SK-N-SH (cell line): ENCODE measurements at regions of chr5 and their contacts with region 1.

Region 1: DNA sequence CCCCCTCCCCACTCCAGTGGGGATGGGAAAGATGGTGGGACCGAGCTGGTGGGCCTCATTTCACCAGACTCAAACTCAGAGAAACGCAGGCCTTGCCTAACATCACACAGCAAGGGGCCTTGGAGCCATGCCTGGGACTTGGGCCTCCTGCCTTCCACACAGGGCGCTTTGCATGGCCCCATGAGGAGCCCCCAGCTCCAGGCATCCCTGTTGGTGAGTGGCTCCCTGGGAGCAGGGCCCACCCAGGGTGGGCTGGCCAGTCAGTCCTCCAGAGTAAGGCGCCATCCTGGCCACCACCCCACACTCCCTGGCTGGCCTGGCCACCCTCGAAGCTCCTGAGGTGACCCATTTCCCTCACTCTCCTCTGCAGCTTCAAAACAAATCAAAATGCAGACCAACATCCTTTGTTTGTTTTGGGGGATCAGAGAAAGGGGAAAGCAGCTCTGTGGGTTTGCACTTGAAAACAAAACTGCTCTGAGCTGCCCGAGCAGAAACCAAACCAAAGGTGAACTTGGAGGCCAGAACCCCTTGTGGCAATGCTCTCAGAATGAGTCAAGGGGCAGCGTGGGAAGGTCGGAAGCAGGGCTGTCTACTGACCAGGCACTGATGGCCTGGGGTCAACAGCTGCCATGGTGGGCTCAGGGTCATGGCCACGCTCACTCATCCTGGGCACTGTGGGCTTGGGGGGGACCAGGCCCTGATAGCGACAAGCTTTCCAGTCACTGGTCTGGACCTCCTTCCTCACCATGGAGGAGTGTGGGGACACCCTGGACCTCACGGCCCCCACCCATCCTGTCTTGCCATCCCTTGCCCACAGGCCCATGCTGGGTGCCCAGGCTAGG is 37.0 kb upstream of the VDAC1 start:
- DNase-seq: no peak
- H3K4me3 ChIP-seq: no peak overlapping the region
- H3K27ac ChIP-seq: no peak overlapping the region
- H3K4me1 ChIP-seq: peaks cover 0 to 3% of the 10 kb centered on the region in 2 experiments; a peak in 1 of 4 replicates
- H3K27me3 ChIP-seq: no peaks in the 10 kb centered on the region
- CTCF ChIP-seq: no peak
- EP300 ChIP-seq: no peak
- RAD21 ChIP-seq: no peak

Region 2: GRCh38 chr5:134004592-134005375 is 37.0 kb before region 1 on chr5 and contains the start of gene VDAC1:
- CTCF ChIA-PET with region 1: interaction called, 32 read pairs
- POLR2A ChIA-PET with region 1: no interaction called
- DNase-seq: peak; percentile 98
- H3K4me3 ChIP-seq: peak within 1 kb of the TSS; percentile 75 to 83
- H3K27ac ChIP-seq: peak within 1 kb of the TSS; percentile 92 to 95
- H3K4me1 ChIP-seq: peaks cover 16 to 36% of the 10 kb centered on the region in 2 experiments; a peak in 2 of 4 replicates
- H3K27me3 ChIP-seq: no peaks in the 10 kb centered on the region
- CTCF ChIP-seq: no peak
- EP300 ChIP-seq: no peak
- RAD21 ChIP-seq: no peak
- polyA plus RNA-seq, gene VDAC1: 155 and 166 TPM in 2 replicates

Region 3: GRCh38 chr5:134063188-134063820 is 21.5 kb after region 1 on chr5:
- CTCF ChIA-PET with region 1: interaction called, 26 read pairs
- POLR2A ChIA-PET with region 1: interaction called, 3 read pairs
- DNase-seq: no peak
- H3K4me3 ChIP-seq: no peak overlapping the region
- H3K27ac ChIP-seq: no peak overlapping the region
- H3K4me1 ChIP-seq: peaks cover 14 to 18% of the 10 kb centered on the region in 2 experiments; a peak in 3 of 4 replicates
- H3K27me3 ChIP-seq: no peaks in the 10 kb centered on the region
- CTCF ChIP-seq: no peak
- EP300 ChIP-seq: no peak
- RAD21 ChIP-seq: no peak

Region 4: DNA sequence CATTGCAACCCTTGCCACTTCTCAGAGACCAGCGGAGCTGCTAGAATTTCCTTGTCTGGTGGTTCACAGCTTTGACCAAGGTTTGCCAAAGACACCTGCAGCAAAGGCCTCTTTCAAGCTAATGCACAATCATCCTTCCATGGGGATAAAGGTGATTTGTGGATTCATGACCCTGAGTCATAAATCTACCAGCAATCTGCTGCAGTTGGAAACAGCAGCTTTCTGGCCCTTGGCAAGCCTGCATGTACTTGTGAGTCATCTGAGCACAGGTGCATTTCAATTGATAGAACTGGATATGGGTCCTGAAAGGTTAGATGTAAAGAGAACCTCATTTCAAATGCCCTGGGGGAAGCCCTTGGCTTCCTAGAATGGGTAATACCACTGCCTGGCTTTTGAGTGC is 51.1 kb after region 1 on chr5:
- CTCF ChIA-PET with region 1: interaction called, 31 read pairs
- POLR2A ChIA-PET with region 1: no interaction called
- DNase-seq: no peak
- H3K4me3 ChIP-seq: no peak overlapping the region
- H3K27ac ChIP-seq: peak overlapping the region in 1 of 2 experiments; percentile 73; a peak in 1 of 4 replicates
- H3K4me1 ChIP-seq: peaks cover 0 to 62% of the 10 kb centered on the region in 2 experiments; a peak in 1 of 4 replicates
- H3K27me3 ChIP-seq: no peaks in the 10 kb centered on the region
- CTCF ChIP-seq: no peak
- EP300 ChIP-seq: no peak
- RAD21 ChIP-seq: no peak

Region 5: GRCh38 chr5:134132372-134133034 is 90.7 kb after region 1 on chr5:
- CTCF ChIA-PET with region 1: interaction called, 673 read pairs
- POLR2A ChIA-PET with region 1: no interaction called
- DNase-seq: no peak
- H3K4me3 ChIP-seq: no peak overlapping the region
- H3K27ac ChIP-seq: peak overlapping the region in 1 of 2 experiments; percentile 39; a peak in 1 of 4 replicates
- H3K4me1 ChIP-seq: peaks cover 7 to 69% of the 10 kb centered on the region in 2 experiments; a peak in 2 of 4 replicates
- H3K27me3 ChIP-seq: no peaks in the 10 kb centered on the region
- CTCF ChIP-seq: no peak
- EP300 ChIP-seq: no peak
- RAD21 ChIP-seq: no peak

Region 6: GRCh38 chr5:134176511-134177368 is 134.9 kb after region 1 on chr5 and contains the start of gene SKP1:
- CTCF ChIA-PET with region 1: interaction called, 34 read pairs
- POLR2A ChIA-PET with region 1: no interaction called
- DNase-seq: peak; percentile 94
- H3K4me3 ChIP-seq: peak within 1 kb of the TSS; percentile 77 to 84
- H3K27ac ChIP-seq: peak within 1 kb of the TSS; percentile 95 to 96
- H3K4me1 ChIP-seq: peaks cover 10 to 22% of the 10 kb centered on the region in 2 experiments; a peak in 2 of 4 replicates
- H3K27me3 ChIP-seq: no peaks in the 10 kb centered on the region
- CTCF ChIP-seq: no peak
- EP300 ChIP-seq: no peak
- RAD21 ChIP-seq: no peak
- polyA plus RNA-seq, gene SKP1: 407 and 428 TPM in 2 replicates